Cardiac septum (tissue), 1 donor: ENCODE measurements at regions of chr13 and their contacts with region 1.

Region 1: GRCh38 chr13:111459803-111460547 is 139.5 kb downstream of the TEX29 start:
- DNase-seq: no peak

Region 2: GRCh38 chr13:111239764-111240670 is 220.0 kb before region 1 on chr13:
- intact Hi-C with region 1: loop called (anchors 10 kb)
- DNase-seq: no peak